Activated CD4-positive, alpha-beta T cell treated with anti-CD3 and anti-CD28 coated beads, Interleukin-2, amount 10 ng/mL, durations not matched to agents 7 days and 5 days (primary cell): ENCODE measurements at regions of chr11 and their contacts with region 1.

Region 1: GRCh38 chr11:57649826-57650738 is at the start of gene YPEL4:
- DNase-seq: peak; percentile 73
- H3K4me3 Mint-ChIP-seq: peak within 1 kb of the TSS; percentile 68
- H3K27ac Mint-ChIP-seq: peak within 1 kb of the TSS; percentile 85
- H3K4me1 Mint-ChIP-seq: peaks cover 63% of the 10 kb centered on the region
- H3K27me3 Mint-ChIP-seq: peaks cover 46% of the 10 kb centered on the region
- total RNA-seq, gene YPEL4: 0.17 to 0.19 TPM

Region 2: GRCh38 chr11:57444362-57445121 is 205.5 kb before region 1 on chr11:
- CTCF ChIA-PET with region 1: interaction called, 10 read pairs
- POLR2A ChIA-PET with region 1: no interaction called
- DNase-seq: no peak
- H3K4me3 Mint-ChIP-seq: no peak overlapping the region
- H3K27ac Mint-ChIP-seq: no peak overlapping the region
- H3K4me1 Mint-ChIP-seq: no peaks in the 10 kb centered on the region
- H3K27me3 Mint-ChIP-seq: peaks cover 9% of the 10 kb centered on the region